ENCODE measurements at regions of chr11 and their contacts with region 1.

Region 1: GRCh38 chr11:119196833-119197483 is 9.2 kb upstream of the CBL start:
- DNase-seq: peak; percentile 66 to 70
- H3K4me3 ChIP-seq: no peak overlapping the region
- H3K27ac ChIP-seq: no peak overlapping the region
- H3K4me1 ChIP-seq: peaks cover 7 to 14% of the 10 kb centered on the region in 2 donors
- H3K27me3 ChIP-seq: no peaks in the 10 kb centered on the region
- CTCF ChIP-seq: peak; percentile 57 to 88 (median 80)
- POLR2A ChIP-seq: no peak

Region 2: DNA sequence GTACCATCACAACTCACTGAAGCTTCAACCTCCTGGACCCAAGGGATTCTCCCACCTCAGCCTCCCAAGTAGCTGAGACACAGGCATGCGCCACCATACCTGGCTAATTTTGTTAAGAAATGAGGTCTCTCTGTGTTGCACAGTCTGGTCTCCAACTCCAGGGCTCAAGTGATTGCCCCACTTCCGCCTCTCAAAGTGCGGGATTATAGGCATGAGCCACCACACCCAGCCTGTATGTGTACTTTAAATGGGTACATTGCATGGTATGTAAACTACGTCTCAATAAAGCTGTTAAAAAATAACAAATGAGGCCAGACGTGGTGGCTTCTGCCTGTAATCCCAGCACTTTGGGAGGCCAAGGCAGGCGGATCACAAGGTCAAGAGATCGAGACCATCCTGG is 369.8 kb before region 1 on chr11:
- intact Hi-C with region 1: no loop called
- DNase-seq: no peak
- H3K4me3 ChIP-seq: no peak overlapping the region
- H3K27ac ChIP-seq: no peak overlapping the region
- H3K4me1 ChIP-seq: no peaks in the 10 kb centered on the region
- H3K27me3 ChIP-seq: no peaks in the 10 kb centered on the region
- CTCF ChIP-seq: no peak
- POLR2A ChIP-seq: no peak

Region 3: DNA sequence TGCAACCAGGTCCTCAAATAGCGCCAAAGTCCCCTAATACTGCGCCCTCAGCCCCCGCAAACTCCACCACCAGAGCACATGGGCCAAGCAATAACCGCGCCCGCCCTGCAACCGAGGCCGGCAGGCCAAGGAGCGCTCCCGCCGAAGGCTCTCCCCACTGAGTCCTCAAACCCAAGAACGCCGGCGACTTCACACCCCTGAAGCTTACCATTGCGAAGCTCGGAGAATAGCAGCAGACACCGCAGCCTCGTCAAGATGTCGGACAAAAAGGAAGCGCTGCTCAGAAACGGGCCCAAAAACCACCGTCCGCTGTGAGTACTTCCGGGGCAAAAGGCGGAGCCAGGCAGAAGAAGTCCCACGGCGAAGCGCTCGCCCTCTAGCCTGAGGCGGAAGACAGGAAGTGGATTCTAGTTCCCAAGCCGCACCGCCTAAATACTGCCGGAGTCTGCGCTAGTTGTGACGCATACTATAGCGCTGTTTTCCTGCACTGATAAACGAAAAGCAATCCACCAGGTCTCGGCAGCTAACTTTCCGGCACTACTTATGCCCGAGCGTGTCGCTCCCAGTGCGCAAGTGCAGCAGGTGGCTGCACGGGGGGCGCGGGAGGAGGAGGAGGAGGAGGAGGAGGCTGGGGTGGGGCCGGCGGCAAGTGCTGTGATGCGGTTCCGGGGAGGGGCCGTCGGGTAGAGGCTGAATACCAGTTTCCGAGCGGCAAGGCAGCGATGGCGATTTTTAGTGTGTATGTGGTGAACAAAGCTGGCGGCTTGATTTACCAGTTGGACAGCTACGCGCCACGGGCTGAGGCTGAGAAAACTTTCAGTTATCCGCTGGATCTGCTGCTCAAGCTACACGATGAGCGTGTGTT is 178.7 kb before region 1 on chr11 and contains the starts of genes RPS25 and TRAPPC4:
- intact Hi-C with region 1: no loop called
- DNase-seq: peak; percentile 96 to 97
- H3K4me3 ChIP-seq: peak within 1 kb of the TSS; percentile 65 to 97 (median 93)
- H3K27ac ChIP-seq: peak within 1 kb of the TSS; percentile 87 to 95 (median 95)
- H3K4me1 ChIP-seq: peaks cover 17 to 25% of the 10 kb centered on the region in 2 donors
- H3K27me3 ChIP-seq: no peaks in the 10 kb centered on the region
- CTCF ChIP-seq: peak in 1 of 6 experiments; percentile 12
- POLR2A ChIP-seq: peak in 1 of 2 donors; percentile 75
- total RNA-seq, gene RPS25: 852 to 1,992 (median 1,622) TPM
- total RNA-seq, gene TRAPPC4: 42.1 to 70.0 (median 53.2) TPM

Region 4: DNA sequence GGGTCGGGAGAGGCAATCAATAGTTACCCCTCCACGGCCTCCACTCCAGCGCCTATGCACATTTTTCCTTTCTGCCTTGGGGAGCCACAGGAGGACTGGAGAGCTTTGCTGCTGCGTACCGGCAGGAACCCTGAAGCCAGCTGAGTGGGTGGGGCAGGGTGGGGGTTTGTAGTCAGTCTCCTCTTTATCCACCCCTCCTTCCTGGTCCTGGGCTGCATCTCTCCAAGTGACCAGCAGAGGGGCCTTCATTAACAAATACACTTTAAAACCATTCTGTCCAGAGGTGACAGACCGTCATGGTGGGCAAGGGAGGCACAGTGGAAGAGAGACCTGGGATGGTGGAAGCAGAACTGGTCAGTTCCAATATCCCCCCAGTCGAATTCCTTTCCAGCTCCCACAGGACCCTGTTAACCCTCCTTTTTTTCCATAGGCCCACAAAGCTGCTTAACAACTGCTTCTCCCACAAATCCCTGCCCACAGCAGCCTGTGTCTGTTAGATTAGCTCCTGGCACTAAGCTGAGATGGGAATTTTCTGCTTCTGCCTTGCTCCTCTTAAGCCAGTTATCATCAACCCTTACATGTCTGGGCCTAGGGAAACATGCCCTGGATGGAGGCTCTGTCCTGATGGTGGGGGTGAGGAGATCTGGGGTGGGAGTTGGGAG is 52.0 kb before region 1 on chr11:
- intact Hi-C with region 1: loop called (anchors 5 kb)
- DNase-seq: peak; percentile 71 to 73
- H3K4me3 ChIP-seq: no peak overlapping the region
- H3K27ac ChIP-seq: no peak overlapping the region
- H3K4me1 ChIP-seq: peaks cover 6 to 12% of the 10 kb centered on the region in 2 donors
- H3K27me3 ChIP-seq: peaks cover 4% of the 10 kb centered on the region
- CTCF ChIP-seq: peak; percentile 49 to 81 (median 64)
- POLR2A ChIP-seq: no peak